HEK293T (cell line): ENCODE measurements at regions of chr3 and their contacts with region 1.

Region 1: GRCh38 chr3:120596116-120596852 is at the start of gene NDUFB4:
- DNase-seq: peak; percentile 99

Region 2: DNA sequence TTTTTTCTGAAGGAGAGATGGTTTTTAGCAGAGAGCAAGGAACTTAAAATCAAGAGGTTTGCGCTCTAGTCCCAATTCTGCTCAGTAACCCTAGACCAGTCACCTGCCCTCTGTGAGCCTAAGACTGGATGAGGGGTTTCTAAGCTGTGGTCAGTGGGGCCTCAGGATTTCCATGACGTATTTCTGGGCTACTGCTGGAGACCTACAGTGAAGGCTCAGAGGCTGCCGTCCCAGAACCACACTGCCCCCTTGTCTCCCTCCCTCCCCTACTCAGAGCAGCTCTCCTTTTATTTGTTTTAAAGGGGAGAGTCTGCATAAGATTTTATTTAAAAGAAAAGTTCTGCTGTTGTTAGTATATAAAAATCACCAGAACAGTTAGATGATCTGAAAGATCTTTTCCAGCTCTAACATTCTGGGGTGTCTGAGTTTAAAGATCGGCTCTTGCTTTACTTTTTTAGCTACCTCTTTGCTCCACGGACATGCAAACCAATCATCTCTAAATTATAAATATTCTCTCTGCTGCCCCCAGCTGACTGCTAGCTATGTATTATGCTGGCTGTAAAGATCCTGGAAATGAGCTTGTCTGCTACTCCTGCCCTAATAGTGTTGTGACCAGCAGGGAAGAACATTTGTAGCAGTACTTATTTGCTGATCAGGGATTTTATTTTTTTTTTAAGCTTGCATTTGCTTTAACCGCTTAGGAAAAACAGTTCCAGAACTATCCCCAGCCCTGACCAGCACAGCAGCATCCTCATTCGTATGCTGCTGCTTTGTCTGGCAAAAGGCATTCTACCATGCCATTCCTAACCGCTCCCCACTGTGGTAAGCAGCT is 28.7 kb before region 1 on chr3:
- CTCF ChIA-PET with region 1: interaction called, 3 read pairs
- POLR2A ChIA-PET with region 1: interaction called, 31 read pairs
- DNase-seq: peak; percentile 49

Region 3: DNA sequence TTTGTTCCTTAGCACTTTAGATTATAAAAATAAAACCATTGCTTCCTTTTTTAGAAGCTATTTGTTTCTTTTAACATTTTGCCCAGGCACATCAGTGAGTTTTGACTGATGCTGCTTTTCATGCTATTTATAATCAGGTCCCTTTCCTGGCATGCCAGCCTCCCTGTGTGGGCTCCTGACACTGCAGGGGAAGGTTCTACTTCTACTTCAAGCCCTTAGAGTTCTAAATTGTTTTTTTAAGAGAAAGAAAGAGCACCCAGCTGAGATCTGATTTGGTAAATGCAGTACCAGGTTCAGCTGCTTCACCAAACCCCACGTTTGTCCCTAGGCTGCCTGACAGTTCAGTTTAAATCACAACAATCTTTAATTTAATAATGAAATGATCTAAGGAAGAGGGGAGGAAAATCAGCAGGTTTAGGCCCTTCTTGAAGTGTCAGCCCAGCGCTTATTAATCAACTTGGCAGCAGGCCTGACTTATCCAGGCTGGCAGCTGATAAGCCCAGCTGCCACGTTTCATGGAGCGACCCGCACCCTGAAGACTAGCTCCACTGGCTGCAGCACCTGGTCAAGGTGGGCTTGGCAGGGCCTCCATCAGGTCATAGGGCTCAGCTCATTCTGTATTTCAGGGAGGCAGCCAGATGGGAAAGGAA is 56.7 kb after region 1 on chr3:
- CTCF ChIA-PET with region 1: no interaction called
- POLR2A ChIA-PET with region 1: no interaction called
- DNase-seq: no peak